GM12878 (cell line): ENCODE measurements at regions of chr5 and their contacts with region 1.

Region 1: DNA sequence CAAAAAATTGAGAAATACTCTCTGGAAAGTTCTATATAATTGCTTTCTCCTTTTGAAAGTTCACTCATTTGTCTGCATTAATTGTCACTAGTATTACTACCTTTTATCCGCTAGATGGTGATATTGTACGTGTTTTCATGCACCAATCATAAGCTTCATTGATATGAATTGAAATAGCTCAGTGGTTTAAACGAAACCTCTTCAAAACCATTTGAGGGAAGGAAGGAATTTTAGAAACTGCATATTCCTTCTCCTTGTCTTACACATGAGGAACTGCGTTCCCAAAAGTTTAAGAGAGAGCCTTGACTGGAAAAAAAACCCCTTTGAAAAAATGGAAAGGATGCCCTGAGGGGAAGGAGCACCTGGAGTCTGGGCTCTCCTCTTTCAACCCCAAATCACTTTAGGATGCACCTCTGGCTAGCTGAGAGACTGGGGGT is 98.6 kb downstream of the YTHDC2 start:
- DNase-seq: no peak
- ATAC-seq: peak; percentile 87
- H3K4me3 ChIP-seq: no peak overlapping the region
- H3K27ac ChIP-seq: no peak overlapping the region
- H3K4me1 ChIP-seq: no peaks in the 10 kb centered on the region
- H3K27me3 ChIP-seq: no peaks in the 10 kb centered on the region
- CTCF ChIP-seq: peak; percentile 36 to 77 (median 53); a peak in 4 of 6 replicates
- EP300 ChIP-seq: no peak
- POLR2A ChIP-seq: no peak
- RAD21 ChIP-seq: peak; percentile 81

Region 2: DNA sequence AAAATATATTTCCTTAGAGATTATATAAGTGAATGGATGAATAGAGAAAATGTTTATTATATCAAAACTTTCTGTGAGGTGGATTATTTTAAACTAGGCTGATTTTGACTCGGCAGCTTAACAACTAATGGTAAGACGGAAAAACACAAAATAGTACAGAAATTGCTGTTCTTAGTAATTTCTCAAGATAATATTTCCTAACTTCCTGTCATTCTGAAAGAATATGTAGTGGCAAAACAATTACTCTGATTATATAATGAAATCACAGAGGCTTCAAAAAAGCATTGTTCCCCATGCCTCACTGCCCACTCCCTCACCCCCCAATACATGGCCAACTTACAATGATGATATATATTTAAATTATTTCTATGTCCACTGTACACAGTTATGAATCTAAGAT is 13.2 kb before region 1 on chr5:
- CTCF ChIA-PET with region 1: interaction called, 15 read pairs
- POLR2A ChIA-PET with region 1: no interaction called
- RAD21 ChIA-PET with region 1: interaction called, 6 read pairs
- SMC1A ChIA-PET with region 1: interaction called, 10 read pairs
- in situ Hi-C with region 1: no loop called
- intact Hi-C with region 1: no loop called
- DNase-seq: no peak
- ATAC-seq: no peak
- H3K4me3 ChIP-seq: no peak overlapping the region
- H3K27ac ChIP-seq: no peak overlapping the region
- H3K4me1 ChIP-seq: no peaks in the 10 kb centered on the region
- H3K27me3 ChIP-seq: no peaks in the 10 kb centered on the region
- CTCF ChIP-seq: no peak
- EP300 ChIP-seq: no peak
- POLR2A ChIP-seq: no peak
- RAD21 ChIP-seq: no peak

Region 3: DNA sequence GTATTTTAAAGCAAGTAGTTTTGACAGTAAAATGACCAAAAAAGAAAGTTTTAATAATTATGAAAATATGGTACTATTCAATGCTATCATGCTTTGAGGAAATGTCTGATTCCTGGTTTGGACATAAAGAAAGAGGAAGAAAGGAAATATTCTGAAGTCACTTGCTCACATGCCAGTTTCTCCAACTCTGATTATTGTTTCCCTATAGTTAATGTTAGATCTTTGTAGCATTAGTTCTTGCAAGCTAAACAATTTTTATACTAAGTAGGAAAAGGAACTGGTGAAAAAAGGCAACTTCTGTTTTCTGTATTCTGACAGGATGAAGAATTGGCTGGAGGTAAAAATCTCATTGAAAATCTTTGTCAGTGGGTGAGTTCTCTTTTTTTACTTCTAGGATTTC is 20.9 kb after region 1 on chr5:
- CTCF ChIA-PET with region 1: interaction called, 10 read pairs
- POLR2A ChIA-PET with region 1: no interaction called
- RAD21 ChIA-PET with region 1: no interaction called
- SMC1A ChIA-PET with region 1: interaction called, 3 read pairs
- in situ Hi-C with region 1: no loop called
- intact Hi-C with region 1: no loop called
- DNase-seq: no peak
- ATAC-seq: no peak
- H3K4me3 ChIP-seq: no peak overlapping the region
- H3K27ac ChIP-seq: no peak overlapping the region
- H3K4me1 ChIP-seq: no peaks in the 10 kb centered on the region
- H3K27me3 ChIP-seq: no peaks in the 10 kb centered on the region
- CTCF ChIP-seq: no peak
- EP300 ChIP-seq: no peak
- POLR2A ChIP-seq: no peak
- RAD21 ChIP-seq: no peak

Region 4: DNA sequence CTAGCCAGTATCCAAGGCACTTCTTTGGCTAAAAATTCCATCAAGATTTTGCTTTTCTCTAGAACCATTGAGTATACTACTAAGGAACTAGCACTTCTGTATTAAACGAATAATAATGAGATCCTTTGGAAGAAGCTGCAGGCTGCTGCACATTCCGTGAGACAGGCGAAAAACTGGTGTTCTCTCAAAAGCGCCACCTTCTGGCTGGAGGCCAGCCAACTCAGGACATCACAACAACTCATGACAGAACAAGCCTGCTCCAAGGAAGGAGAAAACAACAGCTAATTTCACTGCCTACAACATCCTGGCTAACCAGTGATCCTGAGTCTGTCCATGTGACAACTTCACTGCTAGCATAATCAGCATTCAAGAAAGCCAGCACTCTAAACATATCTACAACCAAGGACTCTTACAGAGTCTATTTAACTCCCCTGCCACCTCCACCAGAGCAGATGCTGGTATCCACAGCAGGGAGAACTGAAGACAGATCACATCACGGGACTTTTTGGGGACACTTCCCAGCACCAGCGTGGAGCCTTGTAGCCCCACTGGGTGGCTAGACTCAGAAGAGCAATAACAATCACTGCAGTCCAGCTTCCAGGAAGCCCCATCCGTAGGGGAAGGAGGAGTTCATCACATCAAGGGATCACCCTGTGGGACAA is 51.9 kb after region 1 on chr5:
- CTCF ChIA-PET with region 1: interaction called, 115 read pairs
- POLR2A ChIA-PET with region 1: no interaction called
- RAD21 ChIA-PET with region 1: interaction called, 23 read pairs
- SMC1A ChIA-PET with region 1: interaction called, 38 read pairs
- in situ Hi-C with region 1: no loop called
- intact Hi-C with region 1: loop called (anchors 1 kb)
- DNase-seq: no peak
- ATAC-seq: peak; percentile 83
- H3K4me3 ChIP-seq: no peak overlapping the region
- H3K27ac ChIP-seq: no peak overlapping the region
- H3K4me1 ChIP-seq: no peaks in the 10 kb centered on the region
- H3K27me3 ChIP-seq: no peaks in the 10 kb centered on the region
- CTCF ChIP-seq: peak; percentile 43 to 62 (median 51)
- EP300 ChIP-seq: no peak
- POLR2A ChIP-seq: no peak
- RAD21 ChIP-seq: peak; percentile 30; the same call in 1 of the 2 replicates

Region 5: GRCh38 chr5:113678924-113679575 is 67.0 kb after region 1 on chr5:
- CTCF ChIA-PET with region 1: interaction called, 10 read pairs
- POLR2A ChIA-PET with region 1: no interaction called
- RAD21 ChIA-PET with region 1: interaction called, 5 read pairs
- SMC1A ChIA-PET with region 1: interaction called, 5 read pairs
- in situ Hi-C with region 1: no loop called
- intact Hi-C with region 1: no loop called
- DNase-seq: peak; percentile 8
- ATAC-seq: peak; percentile 96
- H3K4me3 ChIP-seq: no peak overlapping the region
- H3K27ac ChIP-seq: no peak overlapping the region
- H3K4me1 ChIP-seq: no peaks in the 10 kb centered on the region
- H3K27me3 ChIP-seq: no peaks in the 10 kb centered on the region
- CTCF ChIP-seq: peak; percentile 66 to 83 (median 68)
- EP300 ChIP-seq: no peak
- POLR2A ChIP-seq: no peak
- RAD21 ChIP-seq: peak; percentile 97

Region 6: GRCh38 chr5:114789773-114790402 is 1177.8 kb after region 1 on chr5:
- CTCF ChIA-PET with region 1: interaction called, 4 read pairs
- POLR2A ChIA-PET with region 1: no interaction called
- RAD21 ChIA-PET with region 1: interaction called, 3 read pairs
- SMC1A ChIA-PET with region 1: interaction called, 4 read pairs
- in situ Hi-C with region 1: no loop called
- intact Hi-C with region 1: loop called (anchors 5 kb)
- DNase-seq: no peak
- ATAC-seq: peak; percentile 83
- H3K4me3 ChIP-seq: no peak overlapping the region
- H3K27ac ChIP-seq: no peak overlapping the region
- H3K4me1 ChIP-seq: no peaks in the 10 kb centered on the region
- H3K27me3 ChIP-seq: no peaks in the 10 kb centered on the region; a peak in 1 of 4 replicates
- CTCF ChIP-seq: peak; percentile 28 to 64 (median 53); a peak in 5 of 6 replicates
- EP300 ChIP-seq: no peak
- POLR2A ChIP-seq: no peak
- RAD21 ChIP-seq: peak; percentile 60

Region 7: GRCh38 chr5:115069087-115069968 is 1457.2 kb after region 1 on chr5:
- CTCF ChIA-PET with region 1: interaction called, 14 read pairs
- POLR2A ChIA-PET with region 1: no interaction called
- RAD21 ChIA-PET with region 1: interaction called, 4 read pairs
- SMC1A ChIA-PET with region 1: no interaction called
- in situ Hi-C with region 1: no loop called
- intact Hi-C with region 1: no loop called
- DNase-seq: peak; percentile 12
- ATAC-seq: peak; percentile 70
- H3K4me3 ChIP-seq: no peak overlapping the region
- H3K27ac ChIP-seq: peak overlapping the region; percentile 48; the same call in 1 of the 2 replicates
- H3K4me1 ChIP-seq: no peaks in the 10 kb centered on the region
- H3K27me3 ChIP-seq: no peaks in the 10 kb centered on the region
- CTCF ChIP-seq: peak; percentile 24 to 43 (median 43); a peak in 5 of 6 replicates
- EP300 ChIP-seq: no peak
- POLR2A ChIP-seq: no peak
- RAD21 ChIP-seq: peak; percentile 63